Common myeloid progenitor, CD34-positive (primary cell): ENCODE measurements at regions of chr1 and their contacts with region 1.

Region 1: GRCh38 chr1:92310185-92310597 is 11.3 kb downstream of the RPAP2 start:
- DNase-seq: peak; percentile 27 to 58 (median 52)
- H3K4me3 ChIP-seq: no peak overlapping the region
- H3K27ac ChIP-seq: no peak overlapping the region
- H3K4me1 ChIP-seq: peaks cover 0 to 8% (median 4%) of the 10 kb centered on the region in 4 experiments
- H3K27me3 ChIP-seq: no peaks in the 10 kb centered on the region

Region 2: GRCh38 chr1:92372164-92372563 is 62.0 kb after region 1 on chr1:
- CTCF ChIA-PET with region 1: no interaction called
- POLR2A ChIA-PET with region 1: interaction called, 13 read pairs
- DNase-seq: no peak
- H3K4me3 ChIP-seq: no peak overlapping the region
- H3K27ac ChIP-seq: no peak overlapping the region
- H3K4me1 ChIP-seq: peaks cover 8 to 61% (median 36%) of the 10 kb centered on the region in 4 experiments
- H3K27me3 ChIP-seq: no peaks in the 10 kb centered on the region

Region 3: GRCh38 chr1:92485381-92486257 is 175.4 kb after region 1 on chr1:
- CTCF ChIA-PET with region 1: interaction called, 12 read pairs
- POLR2A ChIA-PET with region 1: interaction called, 5 read pairs
- DNase-seq: peak; percentile 70 to 93 (median 89)
- H3K4me3 ChIP-seq: peak overlapping the region; percentile 42 to 96 (median 82)
- H3K27ac ChIP-seq: peak overlapping the region in 1 of 2 experiments; percentile 64
- H3K4me1 ChIP-seq: peaks cover 0 to 57% (median 49%) of the 10 kb centered on the region in 4 experiments
- H3K27me3 ChIP-seq: peaks cover 0 to 5% (median 0%) of the 10 kb centered on the region in 5 experiments

Region 4: DNA sequence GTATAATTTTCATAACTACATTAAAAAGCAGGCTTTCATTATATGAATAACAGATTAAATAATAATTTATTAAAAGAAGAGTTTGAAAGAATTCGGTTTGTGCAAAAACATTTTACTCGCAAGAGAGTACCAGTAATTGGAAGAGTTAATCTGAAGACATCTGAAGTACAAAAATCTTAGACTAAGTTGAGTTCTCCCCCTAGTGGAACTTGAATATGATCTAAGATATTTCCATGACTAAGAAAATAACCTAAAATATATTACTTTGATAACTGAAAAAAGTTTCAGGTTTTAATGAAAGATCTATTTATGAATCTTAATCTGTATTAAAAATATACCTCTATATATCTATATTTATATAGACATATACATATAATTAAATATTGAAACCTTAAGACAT is 289.0 kb after region 1 on chr1:
- CTCF ChIA-PET with region 1: interaction called, 35 read pairs
- POLR2A ChIA-PET with region 1: no interaction called
- DNase-seq: peak; percentile 42 to 68 (median 66)
- H3K4me3 ChIP-seq: no peak overlapping the region
- H3K27ac ChIP-seq: no peak overlapping the region
- H3K4me1 ChIP-seq: no peaks in the 10 kb centered on the region
- H3K27me3 ChIP-seq: no peaks in the 10 kb centered on the region

Region 5: GRCh38 chr1:92623187-92623778 is 313.1 kb after region 1 on chr1:
- CTCF ChIA-PET with region 1: interaction called, 14 read pairs
- POLR2A ChIA-PET with region 1: no interaction called
- DNase-seq: peak; percentile 23 to 51 (median 49)
- H3K4me3 ChIP-seq: no peak overlapping the region
- H3K27ac ChIP-seq: no peak overlapping the region
- H3K4me1 ChIP-seq: no peaks in the 10 kb centered on the region
- H3K27me3 ChIP-seq: no peaks in the 10 kb centered on the region